Mucosa of descending colon (tissue), 3 donors: ENCODE measurements at regions of chr4 and their contacts with region 1.

Region 1: GRCh38 chr4:83261307-83261706 is 23.3 kb downstream of the COQ2 start:
- DNase-seq: peak in 2 of 3 donors; percentile 58 to 75
- ATAC-seq: peak; percentile 86
- H3K4me3 ChIP-seq: no peak overlapping the region
- H3K4me1 ChIP-seq: peaks cover 26% of the 10 kb centered on the region
- CTCF ChIP-seq: no peak

Region 2: DNA sequence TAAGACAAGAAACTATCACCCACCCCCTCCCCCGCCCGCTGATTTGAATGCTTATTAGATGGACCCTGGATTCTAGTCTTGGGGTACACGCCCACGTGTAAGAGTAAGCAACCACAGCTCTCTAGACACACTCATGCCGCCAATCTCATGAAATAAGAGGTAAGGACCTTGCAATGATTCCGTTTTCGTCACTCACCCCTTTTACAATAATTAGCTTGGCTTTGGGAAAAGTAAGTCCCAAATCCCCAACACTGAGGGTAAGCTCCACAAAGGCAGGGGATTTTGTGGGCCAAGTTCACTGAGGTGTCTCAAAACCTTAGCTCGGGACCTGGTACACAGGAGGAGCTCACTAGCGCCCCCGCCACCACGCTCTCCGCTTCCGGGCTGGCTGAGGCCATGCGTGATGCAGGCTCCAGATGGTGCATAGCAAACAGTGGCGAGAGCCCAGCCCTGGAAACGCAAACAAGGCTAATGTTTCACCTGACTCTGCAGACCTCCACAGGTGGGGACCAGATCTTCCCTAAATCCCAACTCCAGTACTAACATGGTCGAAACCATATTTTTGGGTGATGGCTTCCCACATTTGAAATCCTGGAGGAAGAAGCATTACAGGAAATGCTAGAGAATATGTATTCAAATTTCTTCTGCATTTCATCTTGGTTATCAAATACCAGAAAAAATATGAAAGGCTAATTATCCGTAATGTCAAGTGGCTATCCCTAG is 150.9 kb before region 1 on chr4:
- intact Hi-C with region 1: loop called in 1 of 2 experiments (anchors 5 kb)
- DNase-seq: peak; percentile 95 to 98 (median 96)
- ATAC-seq: peak; percentile 88
- H3K4me3 ChIP-seq: peak overlapping the region; percentile 32
- H3K4me1 ChIP-seq: peaks cover 16% of the 10 kb centered on the region
- CTCF ChIP-seq: peak; percentile 47

Region 3: DNA sequence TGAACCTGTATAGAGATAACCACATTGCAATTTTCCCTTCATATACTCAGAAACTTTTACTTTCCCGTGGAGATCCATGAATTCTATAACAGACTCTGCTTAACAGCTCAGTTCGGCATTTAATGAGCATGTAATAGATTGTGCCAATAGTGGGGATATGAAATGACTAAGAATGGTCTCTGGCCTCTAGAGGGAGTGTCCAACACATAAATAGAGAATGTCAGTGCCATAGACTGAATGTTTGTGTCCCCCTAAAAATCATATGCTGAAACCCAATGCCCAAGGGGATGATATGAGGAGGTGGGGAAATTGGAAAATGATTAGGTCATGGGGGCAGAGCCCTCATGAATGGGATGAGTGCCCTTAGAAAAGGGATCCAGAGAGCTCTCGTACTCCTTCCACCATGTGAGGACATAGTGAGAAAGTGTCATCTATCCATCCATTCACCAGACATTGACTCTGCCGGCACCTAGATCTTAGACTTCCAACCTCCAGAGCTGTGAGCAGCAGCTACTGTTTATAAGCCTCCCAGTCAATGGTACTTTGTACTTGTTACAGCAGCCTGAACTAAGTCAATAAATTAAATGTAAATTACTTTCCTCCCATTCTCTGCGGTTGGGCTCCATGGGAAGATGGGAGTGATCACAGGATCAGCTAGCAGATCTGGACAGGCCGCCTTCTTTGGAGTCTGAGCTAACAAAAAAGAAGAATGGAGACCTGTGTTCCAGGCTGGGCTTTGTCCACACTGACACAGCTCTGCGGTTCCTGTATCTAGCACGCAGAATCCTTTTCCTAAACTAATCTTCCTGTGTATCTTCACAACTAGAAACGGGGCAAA is 101.4 kb after region 1 on chr4:
- intact Hi-C with region 1: no loop called
- DNase-seq: peak in 1 of 3 donors; percentile 36
- ATAC-seq: peak; percentile 96
- H3K4me3 ChIP-seq: no peak overlapping the region
- H3K4me1 ChIP-seq: peaks cover 3% of the 10 kb centered on the region
- CTCF ChIP-seq: no peak

Region 4: GRCh38 chr4:83606898-83607297 is 345.6 kb after region 1 on chr4:
- intact Hi-C with region 1: no loop called
- DNase-seq: no peak
- ATAC-seq: peak; percentile 35
- H3K4me3 ChIP-seq: no peak overlapping the region
- H3K4me1 ChIP-seq: peaks cover 29% of the 10 kb centered on the region
- CTCF ChIP-seq: no peak